ENCODE measurements at regions of chr22 and their contacts with region 1.

Region 1: DNA sequence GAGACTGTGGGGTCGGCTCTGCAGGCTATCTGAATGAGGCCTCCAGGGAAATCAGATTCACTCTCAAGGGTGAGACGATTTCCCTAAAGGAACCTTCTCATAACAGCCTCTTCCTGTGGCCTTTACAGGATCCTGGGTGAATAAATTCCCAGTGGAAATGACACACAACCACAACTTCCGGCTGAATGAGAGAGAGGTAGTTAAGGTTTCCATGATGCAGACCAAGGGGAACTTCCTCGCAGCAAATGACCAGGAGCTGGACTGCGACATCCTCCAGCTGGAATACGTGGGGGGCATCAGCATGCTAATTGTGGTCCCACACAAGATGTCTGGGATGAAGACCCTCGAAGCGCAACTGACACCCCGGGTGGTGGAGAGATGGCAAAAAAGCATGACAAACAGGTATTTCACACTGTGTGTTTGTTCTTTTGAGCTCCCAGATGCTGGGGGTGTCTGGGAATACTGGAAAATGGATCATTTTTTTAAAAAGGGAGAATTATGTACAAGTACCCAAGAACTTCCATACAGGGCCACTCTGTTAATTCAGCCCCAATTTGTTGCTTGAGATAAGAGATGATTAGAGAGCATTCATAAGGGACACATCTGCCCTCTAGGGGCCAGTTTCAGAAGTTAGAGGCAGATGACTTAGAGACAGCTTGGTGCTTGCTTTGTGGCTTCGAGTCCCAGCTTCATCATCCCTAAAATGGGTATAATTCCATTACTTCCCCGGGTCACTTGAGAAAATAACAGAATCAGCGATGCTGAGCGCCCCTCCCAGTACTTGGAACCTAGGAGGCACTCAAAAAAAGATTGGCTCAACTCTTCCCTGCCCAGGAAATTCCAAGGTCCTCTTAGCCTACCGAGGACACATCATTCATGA is 10.2 kb downstream of the SERPIND1 start:
- DNase-seq: no peak
- H3K4me3 ChIP-seq: no peak overlapping the region
- CTCF ChIP-seq: peak; percentile 70

Region 2: DNA sequence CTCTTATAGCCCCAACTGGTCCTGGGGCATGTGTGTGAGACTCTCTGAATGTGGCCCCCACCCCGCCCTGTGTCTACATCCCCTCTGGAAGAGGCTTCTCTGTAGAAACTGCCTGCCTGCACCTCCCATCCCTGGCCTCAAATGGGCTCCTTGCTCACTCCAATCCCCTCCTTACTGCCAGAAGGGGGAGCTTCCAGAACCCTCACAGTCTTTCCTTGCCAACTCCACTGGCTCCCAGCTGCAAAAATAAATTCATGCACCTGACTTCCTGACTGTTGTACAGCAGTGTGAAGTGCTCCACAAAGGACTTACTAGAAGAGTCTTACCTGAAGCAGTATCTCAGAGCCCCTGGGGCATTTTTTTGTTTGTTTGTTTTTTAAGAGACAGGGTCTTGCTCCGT is 25.4 kb before region 1 on chr22:
- CTCF ChIA-PET with region 1: interaction called, 13 read pairs
- POLR2A ChIA-PET with region 1: no interaction called
- DNase-seq: no peak
- H3K4me3 ChIP-seq: no peak overlapping the region
- CTCF ChIP-seq: no peak

Region 3: GRCh38 chr22:20771918-20772625 is 12.0 kb before region 1 on chr22:
- CTCF ChIA-PET with region 1: interaction called, 35 read pairs
- POLR2A ChIA-PET with region 1: no interaction called
- DNase-seq: no peak
- H3K4me3 ChIP-seq: no peak overlapping the region
- CTCF ChIP-seq: no peak

Measured in AG04449 (cell line).